ENCODE measurements at regions of chr10 and their contacts with region 1.

Region 1: DNA sequence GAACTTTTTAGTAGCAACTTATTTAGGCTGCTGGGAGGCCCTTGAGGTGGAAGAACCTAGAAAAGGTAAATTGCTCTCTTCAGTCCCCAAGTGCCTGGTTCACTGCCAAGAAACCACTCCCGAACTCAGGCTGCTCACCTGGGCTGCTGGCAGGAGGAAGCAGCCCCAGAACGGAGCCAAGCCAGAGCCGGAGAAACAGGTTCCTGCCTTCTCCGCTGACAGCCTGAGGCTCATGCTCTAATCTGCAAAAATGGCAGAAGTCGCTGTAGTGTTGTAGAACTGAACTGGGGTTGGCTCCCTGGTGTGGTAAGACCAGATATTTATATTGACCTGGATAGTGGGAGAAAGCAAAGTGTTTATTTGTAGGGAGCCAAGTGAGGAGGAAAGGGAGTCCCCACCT is 136.0 kb downstream of the CUL2 start:
- DNase-seq: peak; percentile 90 to 91
- H3K4me3 ChIP-seq: no peak overlapping the region
- H3K27ac ChIP-seq: no peak overlapping the region
- H3K4me1 ChIP-seq: peaks cover 27% of the 10 kb centered on the region
- H3K27me3 ChIP-seq: no peaks in the 10 kb centered on the region
- CTCF ChIP-seq: no peak

Region 2: GRCh38 chr10:34906067-34906965 is 47.9 kb before region 1 on chr10:
- CTCF ChIA-PET with region 1: no interaction called
- POLR2A ChIA-PET with region 1: no interaction called
- intact Hi-C with region 1: loop called (anchors 2 kb)
- DNase-seq: peak in 1 of 2 experiments; percentile 63
- H3K4me3 ChIP-seq: no peak overlapping the region
- H3K27ac ChIP-seq: no peak overlapping the region
- H3K4me1 ChIP-seq: no peaks in the 10 kb centered on the region
- H3K27me3 ChIP-seq: no peaks in the 10 kb centered on the region
- CTCF ChIP-seq: no peak

Region 3: DNA sequence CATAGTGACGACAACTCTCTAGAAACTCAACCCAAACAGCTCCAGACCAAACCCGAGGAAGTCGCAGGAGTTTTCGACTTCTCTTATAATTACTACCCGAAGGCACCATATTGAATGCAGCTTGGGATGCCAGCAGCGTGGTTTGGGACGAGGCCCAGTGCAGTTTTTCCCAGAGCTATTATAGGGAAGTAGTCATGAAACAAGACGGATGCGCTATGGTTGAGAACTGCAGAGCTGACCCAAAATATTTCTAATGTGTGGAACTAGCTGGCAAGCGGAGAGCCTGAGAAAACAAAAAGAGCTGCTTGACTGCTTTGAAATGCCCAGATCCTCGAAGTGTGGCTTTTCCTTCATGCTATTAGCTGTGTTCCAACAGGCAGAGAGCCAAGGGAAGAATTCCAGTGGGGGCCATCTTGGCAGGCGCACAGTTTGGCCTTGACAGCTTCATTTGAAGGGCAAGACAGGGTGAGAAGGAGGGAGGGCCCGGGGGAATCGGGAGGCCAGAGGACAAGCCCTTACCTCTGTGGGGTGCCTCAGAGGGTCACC is 13.2 kb after region 1 on chr10:
- CTCF ChIA-PET with region 1: interaction called, 10 read pairs
- POLR2A ChIA-PET with region 1: no interaction called
- intact Hi-C with region 1: no loop called
- DNase-seq: no peak
- H3K4me3 ChIP-seq: no peak overlapping the region
- H3K27ac ChIP-seq: no peak overlapping the region
- H3K4me1 ChIP-seq: peaks cover 11% of the 10 kb centered on the region
- H3K27me3 ChIP-seq: no peaks in the 10 kb centered on the region
- CTCF ChIP-seq: no peak

Region 4: GRCh38 chr10:35236739-35237138 is 282.6 kb after region 1 on chr10:
- CTCF ChIA-PET with region 1: no interaction called
- POLR2A ChIA-PET with region 1: no interaction called
- intact Hi-C with region 1: no loop called
- DNase-seq: peak in 1 of 2 experiments; percentile 16
- H3K4me3 ChIP-seq: no peak overlapping the region
- H3K27ac ChIP-seq: no peak overlapping the region
- H3K4me1 ChIP-seq: no peaks in the 10 kb centered on the region
- H3K27me3 ChIP-seq: no peaks in the 10 kb centered on the region
- CTCF ChIP-seq: peak; percentile 30; the same call in 1 of the 2 replicates